ENCODE measurements at regions of chr12 and their contacts with region 1.

Region 1: DNA sequence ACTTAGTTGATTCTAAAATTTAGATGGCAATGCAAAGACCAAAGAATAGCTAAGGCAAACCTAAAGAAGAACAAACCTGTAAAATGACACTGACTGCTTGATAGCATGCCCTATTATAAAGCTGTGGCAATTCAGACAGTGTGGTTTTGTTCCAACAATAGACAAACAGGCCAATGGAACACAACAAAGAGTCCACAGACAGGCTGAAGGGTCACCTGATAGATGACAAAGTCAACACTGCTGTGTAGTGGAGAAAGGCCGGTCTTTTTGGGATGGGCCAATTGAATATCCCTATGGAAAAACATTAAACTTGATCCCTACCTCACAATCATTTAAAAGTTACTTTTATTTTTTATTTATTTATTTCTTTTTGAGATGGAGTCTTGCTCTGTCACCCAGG is 33.8 kb upstream of the SLC25A3 start:
- DNase-seq: no peak
- H3K4me3 ChIP-seq: no peak overlapping the region
- H3K27ac ChIP-seq: no peak overlapping the region
- H3K4me1 ChIP-seq: no peaks in the 10 kb centered on the region
- H3K27me3 ChIP-seq: no peaks in the 10 kb centered on the region
- CTCF ChIP-seq: no peak
- POLR2A ChIP-seq: no peak

Region 2: GRCh38 chr12:98296462-98297079 is 263.1 kb before region 1 on chr12:
- intact Hi-C with region 1: no loop called
- DNase-seq: no peak
- H3K4me3 ChIP-seq: no peak overlapping the region
- H3K27ac ChIP-seq: no peak overlapping the region
- H3K4me1 ChIP-seq: no peaks in the 10 kb centered on the region
- H3K27me3 ChIP-seq: no peaks in the 10 kb centered on the region
- CTCF ChIP-seq: no peak
- POLR2A ChIP-seq: no peak

Region 3: GRCh38 chr12:98635657-98636323 is 76.1 kb after region 1 on chr12:
- intact Hi-C with region 1: no loop called
- DNase-seq: no peak
- H3K4me3 ChIP-seq: no peak overlapping the region
- H3K27ac ChIP-seq: no peak overlapping the region
- H3K4me1 ChIP-seq: peaks cover 0 to 52% (median 14%) of the 10 kb centered on the region in 6 donors
- H3K27me3 ChIP-seq: no peaks in the 10 kb centered on the region
- CTCF ChIP-seq: no peak
- POLR2A ChIP-seq: no peak

Region 4: DNA sequence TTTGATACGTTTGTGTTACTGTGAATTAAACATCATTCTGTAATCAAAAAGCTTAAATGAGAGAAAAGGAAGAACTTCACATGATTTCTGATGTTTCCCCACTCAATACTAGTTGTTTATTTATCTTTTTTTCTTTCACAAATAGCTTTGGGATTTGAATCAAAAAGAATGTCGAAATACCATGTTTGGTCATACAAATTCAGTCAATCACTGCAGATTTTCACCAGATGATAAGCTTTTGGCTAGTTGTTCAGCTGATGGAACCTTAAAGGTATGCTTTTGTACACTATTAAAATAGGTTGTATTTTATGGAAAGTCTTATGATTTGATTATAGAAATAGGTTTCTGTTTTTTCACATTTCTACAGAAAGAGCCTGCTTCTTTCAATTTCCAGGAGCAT is 126.9 kb after region 1 on chr12:
- intact Hi-C with region 1: no loop called
- DNase-seq: no peak
- H3K4me3 ChIP-seq: no peak overlapping the region
- H3K27ac ChIP-seq: no peak overlapping the region
- H3K4me1 ChIP-seq: peaks cover 0 to 12% (median 0%) of the 10 kb centered on the region in 6 donors
- H3K27me3 ChIP-seq: no peaks in the 10 kb centered on the region
- CTCF ChIP-seq: no peak
- POLR2A ChIP-seq: no peak

Region 5: DNA sequence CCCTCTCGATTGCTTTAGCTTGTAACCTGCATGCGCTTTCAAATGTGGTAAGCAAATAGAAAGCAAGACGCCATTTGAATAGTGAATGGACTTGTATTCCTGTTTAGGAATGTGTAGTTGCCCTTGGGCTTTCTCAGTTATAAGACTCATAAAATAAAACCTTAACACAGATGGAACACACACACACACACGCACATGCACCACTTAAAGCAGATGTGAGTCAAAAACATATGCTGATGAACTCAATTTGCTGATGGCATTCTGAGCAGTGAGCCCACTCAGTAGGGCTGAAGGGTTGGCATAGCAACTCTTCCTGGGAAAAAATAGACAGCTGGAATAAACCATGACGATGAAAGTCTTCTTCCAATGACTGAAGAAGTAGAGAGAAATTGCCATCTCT is 445.9 kb after region 1 on chr12:
- intact Hi-C with region 1: loop called (anchors 10 kb)
- DNase-seq: no peak
- H3K4me3 ChIP-seq: no peak overlapping the region
- H3K27ac ChIP-seq: no peak overlapping the region
- H3K4me1 ChIP-seq: no peaks in the 10 kb centered on the region
- H3K27me3 ChIP-seq: no peaks in the 10 kb centered on the region
- CTCF ChIP-seq: no peak
- POLR2A ChIP-seq: no peak